Tibial artery (tissue), 4 donors: ENCODE measurements at regions of chr7 and their contacts with region 1.

Region 1: DNA sequence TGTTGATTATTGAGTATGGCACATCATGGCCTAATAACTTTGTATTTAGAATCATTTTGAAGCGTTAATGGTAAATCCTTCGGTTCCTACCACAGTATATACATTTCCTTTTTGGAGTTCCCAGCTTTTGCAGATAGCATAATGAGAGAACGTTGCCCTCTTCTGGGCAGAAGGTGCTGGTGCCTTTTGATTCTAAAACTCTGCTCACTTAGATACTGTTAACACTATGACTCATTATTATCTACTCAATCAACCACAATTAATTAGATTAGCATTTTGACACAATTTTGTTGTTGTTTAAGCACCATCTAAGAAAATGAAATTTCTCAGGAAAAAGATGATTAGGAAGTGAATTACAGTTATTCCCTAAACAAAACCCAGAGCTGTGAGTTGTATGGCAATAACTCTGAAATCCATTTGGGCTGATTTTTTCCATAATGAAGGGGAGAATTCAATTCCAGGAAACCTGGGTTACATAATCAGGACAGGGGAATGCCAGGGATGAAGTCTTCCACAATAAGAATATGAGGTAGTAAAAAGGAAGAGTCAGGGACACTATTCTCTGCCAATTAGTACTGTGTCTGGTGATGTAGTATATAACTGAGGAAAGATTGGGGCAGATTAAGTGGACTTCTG is 11.5 kb upstream of the DLD start:
- DNase-seq: no peak
- H3K4me3 ChIP-seq: no peak overlapping the region
- H3K27ac ChIP-seq: no peak overlapping the region
- H3K4me1 ChIP-seq: no peaks in the 10 kb centered on the region
- H3K27me3 ChIP-seq: peaks cover 0 to 8% of the 10 kb centered on the region in 2 donors
- CTCF ChIP-seq: peak; percentile 47 to 55

Region 2: GRCh38 chr7:107856806-107857540 is 22.5 kb before region 1 on chr7:
- intact Hi-C with region 1: no loop called
- DNase-seq: no peak
- H3K4me3 ChIP-seq: no peak overlapping the region
- H3K27ac ChIP-seq: no peak overlapping the region
- H3K4me1 ChIP-seq: no peaks in the 10 kb centered on the region
- H3K27me3 ChIP-seq: no peaks in the 10 kb centered on the region
- CTCF ChIP-seq: no peak

Region 3: DNA sequence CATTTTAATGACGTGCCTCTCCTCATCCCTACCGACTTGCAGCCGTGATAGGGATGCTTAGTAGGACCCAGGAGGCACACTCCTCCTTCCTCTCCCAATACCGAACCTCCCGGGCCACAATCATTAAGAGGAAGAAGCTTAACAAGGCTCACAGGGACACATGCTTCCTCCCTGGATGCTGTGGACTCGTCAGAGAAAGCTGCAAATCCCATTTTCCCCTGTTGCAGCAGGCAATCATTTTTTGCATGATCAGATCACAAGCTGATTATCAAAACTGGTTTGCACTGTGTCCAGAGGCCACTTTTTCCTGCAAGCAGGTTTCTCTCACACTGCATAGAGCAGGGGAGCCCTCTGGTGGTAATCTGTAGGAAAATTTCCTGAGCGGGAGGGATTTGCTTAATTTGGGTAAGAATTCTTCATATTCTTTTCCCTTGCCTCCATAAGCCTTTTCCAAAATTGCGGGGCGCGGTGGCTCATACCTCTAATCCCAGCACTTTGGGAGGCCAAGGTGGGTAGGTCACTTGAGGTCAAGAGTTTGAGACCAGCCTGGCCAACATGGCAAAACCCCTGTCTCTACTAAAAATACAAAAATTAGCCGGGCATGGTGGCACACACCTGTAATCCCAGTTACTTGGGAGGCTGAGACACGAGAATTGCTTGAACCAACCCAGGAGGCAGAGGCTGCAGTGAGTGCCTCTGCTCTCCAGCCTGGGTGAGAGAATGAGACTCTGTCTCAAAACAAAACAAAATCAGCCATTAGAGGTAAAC is 266.7 kb after region 1 on chr7:
- intact Hi-C with region 1: loop called (anchors 10 kb)
- DNase-seq: peak; percentile 64 to 67
- H3K4me3 ChIP-seq: no peak overlapping the region
- H3K27ac ChIP-seq: no peak overlapping the region
- H3K4me1 ChIP-seq: peaks cover 0 to 4% (median 0%) of the 10 kb centered on the region in 4 donors
- H3K27me3 ChIP-seq: no peaks in the 10 kb centered on the region
- CTCF ChIP-seq: peak; percentile 76 to 87